AG04449 (cell line): ENCODE measurements at regions of chr2 and their contacts with region 1.

Region 1: DNA sequence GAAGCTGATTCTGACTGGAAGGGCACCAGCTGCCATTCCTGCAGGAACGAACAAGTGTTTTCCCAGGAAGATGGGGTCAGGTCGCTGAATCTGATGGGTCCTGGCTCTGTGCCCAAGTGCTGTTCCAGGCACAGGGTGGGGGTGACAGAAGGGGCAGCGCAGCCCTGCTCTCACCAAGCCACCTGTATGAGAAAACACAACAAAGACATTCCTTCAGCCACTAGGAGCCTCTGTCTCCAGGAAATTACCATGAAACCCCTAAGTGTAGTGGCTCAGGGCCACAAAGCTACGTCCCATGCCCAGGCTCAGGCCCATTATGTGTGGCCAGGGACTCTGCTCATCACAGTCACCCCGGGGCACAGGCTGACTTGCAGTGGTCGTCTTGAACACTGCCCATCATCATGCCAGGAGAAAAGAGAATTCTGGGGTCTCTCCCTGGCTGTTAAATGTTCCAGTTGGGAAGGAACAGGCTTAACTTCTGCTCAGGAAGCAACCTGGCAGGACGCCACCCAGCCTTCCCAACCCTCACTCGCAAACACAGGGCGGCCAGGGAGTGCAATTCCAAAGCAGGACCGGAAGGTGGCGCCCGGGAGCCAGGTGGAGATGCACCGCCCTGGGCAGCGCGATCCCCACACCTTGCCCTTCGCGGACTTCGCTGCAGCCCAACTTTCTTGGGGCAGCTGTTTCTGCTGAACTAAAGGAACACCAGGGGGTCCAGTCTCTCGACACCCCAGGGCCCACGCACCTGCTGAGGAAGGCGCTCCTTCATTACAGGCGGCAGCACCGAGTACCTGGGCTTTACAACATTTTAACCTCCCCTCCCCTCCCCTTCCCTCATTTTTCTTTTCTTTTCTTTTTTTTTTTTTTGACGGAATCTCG is 11.0 kb upstream of the SFTPB start:
- DNase-seq: no peak
- H3K4me3 ChIP-seq: no peak overlapping the region
- CTCF ChIP-seq: peak; percentile 99

Region 2: DNA sequence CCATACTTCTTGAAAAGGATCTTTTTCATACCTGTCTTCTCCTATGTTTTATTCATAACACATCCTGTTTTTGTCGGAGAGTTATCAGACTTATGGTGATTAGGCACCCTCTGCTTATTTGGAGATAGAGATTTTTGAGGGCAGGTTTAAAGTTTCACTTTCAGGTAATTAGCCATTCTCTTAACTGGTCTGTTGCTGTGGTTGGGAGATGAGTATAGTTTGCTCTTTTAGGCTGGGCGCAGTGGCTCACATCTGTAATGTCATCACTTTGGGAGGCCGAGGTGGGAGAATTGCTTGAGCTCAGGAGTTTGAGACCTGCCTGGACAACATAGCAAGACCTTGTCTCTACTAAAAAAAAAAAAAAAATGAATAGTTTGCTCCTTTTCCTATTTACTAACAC is 36.3 kb before region 1 on chr2:
- CTCF ChIA-PET with region 1: interaction called, 19 read pairs
- POLR2A ChIA-PET with region 1: no interaction called
- DNase-seq: no peak
- H3K4me3 ChIP-seq: no peak overlapping the region
- CTCF ChIP-seq: no peak

Region 3: GRCh38 chr2:85655961-85656417 is 23.0 kb before region 1 on chr2:
- CTCF ChIA-PET with region 1: interaction called, 19 read pairs
- POLR2A ChIA-PET with region 1: no interaction called
- DNase-seq: no peak
- H3K4me3 ChIP-seq: no peak overlapping the region
- CTCF ChIP-seq: no peak

Region 4: DNA sequence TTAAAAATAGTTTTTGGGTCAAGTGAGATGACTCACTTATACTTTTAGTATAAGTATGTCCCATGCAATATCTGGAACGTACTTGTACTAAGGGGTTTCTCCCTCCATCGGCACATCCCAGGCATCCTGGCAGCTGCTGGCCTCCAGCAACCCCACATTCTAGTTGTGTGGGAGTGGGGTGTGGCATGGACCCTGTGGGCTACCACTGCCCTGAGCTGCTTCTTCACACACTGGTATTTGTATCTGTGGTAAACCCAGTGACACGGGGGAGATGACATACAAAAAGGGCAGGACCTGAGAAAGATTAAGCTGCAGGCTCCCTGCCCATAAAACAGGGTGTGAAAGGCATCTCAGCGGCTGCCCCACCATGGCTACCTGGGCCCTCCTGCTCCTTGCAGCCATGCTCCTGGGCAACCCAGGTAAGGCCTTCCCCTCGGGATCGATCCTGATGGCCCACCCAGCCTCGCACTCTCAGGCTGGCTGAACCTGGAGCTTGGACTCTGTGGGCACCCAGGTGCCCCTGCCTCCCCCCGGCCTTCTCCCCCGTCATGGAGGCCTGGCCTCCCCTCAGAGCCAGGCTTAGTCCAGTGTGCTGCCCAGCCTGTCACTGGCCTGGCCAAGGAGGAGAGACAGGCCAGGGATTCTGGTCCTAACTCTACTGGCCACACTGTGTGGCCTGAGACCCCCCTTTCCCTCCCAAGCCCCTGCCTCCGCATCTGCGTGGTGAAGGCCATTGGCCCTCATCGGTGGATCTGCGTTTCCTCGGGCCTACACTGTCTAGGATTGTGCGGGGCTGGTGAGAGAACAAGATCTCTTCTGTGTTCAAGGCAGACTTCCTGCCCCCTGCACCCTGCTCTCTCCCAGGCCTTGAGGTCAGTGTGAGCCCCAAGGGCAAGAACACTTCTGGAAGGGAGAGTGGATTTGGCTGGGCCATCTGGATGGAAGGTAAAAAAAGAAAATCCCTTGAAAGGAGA is 15.3 kb after region 1 on chr2 and contains the start of gene GNLY:
- CTCF ChIA-PET with region 1: interaction called, 40 read pairs
- POLR2A ChIA-PET with region 1: no interaction called
- DNase-seq: no peak
- H3K4me3 ChIP-seq: no peak within 1 kb of the TSS
- CTCF ChIP-seq: no peak